Activated naive CD4-positive, alpha-beta T cell treated with anti-CD3 and anti-CD28 coated beads for 36 hours (primary cell): ENCODE measurements at regions of chr15 and their contacts with region 1.

Region 1: GRCh38 chr15:91706322-91707032 is 147.0 kb upstream of the SLCO3A1 start:
- DNase-seq: peak; percentile 97
- H3K4me3 Mint-ChIP-seq: no peak overlapping the region
- H3K27ac Mint-ChIP-seq: no peak overlapping the region
- H3K4me1 Mint-ChIP-seq: peaks cover 17% of the 10 kb centered on the region
- H3K27me3 Mint-ChIP-seq: peaks cover 5% of the 10 kb centered on the region

Region 2: GRCh38 chr15:91040856-91041255 is 665.6 kb before region 1 on chr15:
- CTCF ChIA-PET with region 1: no interaction called
- intact Hi-C with region 1: no loop called
- DNase-seq: no peak
- H3K4me3 Mint-ChIP-seq: no peak overlapping the region
- H3K27ac Mint-ChIP-seq: no peak overlapping the region
- H3K4me1 Mint-ChIP-seq: no peaks in the 10 kb centered on the region
- H3K27me3 Mint-ChIP-seq: no peaks in the 10 kb centered on the region

Region 3: GRCh38 chr15:91469632-91470567 is 236.6 kb before region 1 on chr15:
- CTCF ChIA-PET with region 1: interaction called, 5 read pairs
- intact Hi-C with region 1: loop called (anchors 1 kb)
- DNase-seq: peak; percentile 93
- H3K4me3 Mint-ChIP-seq: peak overlapping the region; percentile 0
- H3K27ac Mint-ChIP-seq: peak overlapping the region; percentile 82
- H3K4me1 Mint-ChIP-seq: peaks cover 50% of the 10 kb centered on the region
- H3K27me3 Mint-ChIP-seq: no peaks in the 10 kb centered on the region

Region 4: GRCh38 chr15:91694831-91695210 is 11.7 kb before region 1 on chr15:
- CTCF ChIA-PET with region 1: interaction called, 21 read pairs
- intact Hi-C with region 1: no loop called
- DNase-seq: no peak
- H3K4me3 Mint-ChIP-seq: no peak overlapping the region
- H3K27ac Mint-ChIP-seq: no peak overlapping the region
- H3K4me1 Mint-ChIP-seq: no peaks in the 10 kb centered on the region
- H3K27me3 Mint-ChIP-seq: no peaks in the 10 kb centered on the region

Region 5: DNA sequence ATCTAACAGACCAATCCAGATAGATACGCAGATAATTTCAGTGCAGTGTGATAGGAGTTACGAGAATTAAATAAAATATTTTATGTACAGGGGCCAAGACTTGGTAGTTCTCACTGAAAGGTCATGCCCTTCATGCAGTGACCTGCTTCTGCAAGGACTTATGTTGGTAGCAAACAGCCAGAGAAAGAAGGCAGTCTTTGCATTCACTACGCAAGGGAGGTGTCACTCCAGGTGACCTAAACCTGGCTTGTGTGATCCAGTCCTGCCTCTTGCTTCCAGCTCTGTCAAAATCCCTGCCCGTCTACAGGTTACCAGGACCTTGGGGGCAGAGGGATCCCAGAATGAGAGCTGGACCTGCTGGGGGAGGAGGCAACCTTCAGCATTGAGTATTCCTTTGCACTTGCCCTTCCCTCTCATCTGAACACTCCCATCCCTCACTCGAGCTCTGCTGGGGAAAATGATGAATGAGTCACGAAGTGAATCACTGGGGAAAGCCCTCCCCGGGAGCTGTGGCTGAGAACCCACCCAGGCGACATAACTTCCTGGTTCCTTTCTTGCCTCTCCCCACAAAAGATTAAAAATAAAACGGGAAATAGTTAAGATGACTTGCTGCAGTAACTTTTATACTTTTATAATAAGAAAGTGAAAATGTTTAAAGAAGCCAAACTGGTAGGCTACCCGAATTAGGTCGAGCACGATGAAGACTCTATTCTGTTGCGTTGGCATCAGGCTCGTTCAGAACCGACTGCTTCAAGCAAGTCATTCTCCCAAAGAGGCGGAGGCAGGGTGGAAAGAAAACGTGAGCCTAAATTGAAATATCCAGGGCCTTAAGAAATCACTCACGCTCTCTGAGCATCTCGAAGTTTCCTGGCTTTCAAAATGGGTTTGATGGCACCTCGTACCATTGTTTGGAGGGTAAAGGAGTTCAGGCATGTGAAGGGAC is 363.1 kb after region 1 on chr15:
- CTCF ChIA-PET with region 1: interaction called, 5 read pairs
- intact Hi-C with region 1: loop called (anchors 2 kb)
- DNase-seq: peak; percentile 78
- H3K4me3 Mint-ChIP-seq: peak overlapping the region; percentile 52
- H3K27ac Mint-ChIP-seq: peak overlapping the region; percentile 73
- H3K4me1 Mint-ChIP-seq: peaks cover 47% of the 10 kb centered on the region
- H3K27me3 Mint-ChIP-seq: no peaks in the 10 kb centered on the region